ENCODE measurements at regions of chr18 and their contacts with region 1.

Region 1: DNA sequence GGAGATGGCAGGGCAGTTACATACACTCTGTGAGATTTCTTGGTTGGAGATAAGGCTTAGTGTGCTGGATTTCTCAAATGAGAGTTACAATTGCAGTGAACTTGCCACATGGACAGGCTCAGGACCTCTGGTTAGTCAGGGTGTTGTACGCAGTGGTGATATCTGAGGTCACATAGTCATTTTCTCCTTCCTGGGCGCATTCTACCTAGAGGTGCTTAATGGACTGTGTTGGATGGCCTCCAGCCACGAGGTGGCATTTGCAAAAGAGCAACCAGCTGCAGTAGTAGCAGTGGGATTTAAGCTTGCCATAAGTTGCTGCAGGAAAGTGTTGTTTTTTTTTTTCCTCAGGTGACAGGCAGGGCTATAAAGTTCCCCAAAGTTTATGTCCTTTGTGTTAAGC is 173.8 kb upstream of the TMEM200C start:
- DNase-seq: no peak
- H3K4me3 ChIP-seq: no peak overlapping the region
- H3K27ac ChIP-seq: no peak overlapping the region
- H3K4me1 ChIP-seq: no peaks in the 10 kb centered on the region
- H3K27me3 ChIP-seq: no peaks in the 10 kb centered on the region
- CTCF ChIP-seq: no peak

Region 2: DNA sequence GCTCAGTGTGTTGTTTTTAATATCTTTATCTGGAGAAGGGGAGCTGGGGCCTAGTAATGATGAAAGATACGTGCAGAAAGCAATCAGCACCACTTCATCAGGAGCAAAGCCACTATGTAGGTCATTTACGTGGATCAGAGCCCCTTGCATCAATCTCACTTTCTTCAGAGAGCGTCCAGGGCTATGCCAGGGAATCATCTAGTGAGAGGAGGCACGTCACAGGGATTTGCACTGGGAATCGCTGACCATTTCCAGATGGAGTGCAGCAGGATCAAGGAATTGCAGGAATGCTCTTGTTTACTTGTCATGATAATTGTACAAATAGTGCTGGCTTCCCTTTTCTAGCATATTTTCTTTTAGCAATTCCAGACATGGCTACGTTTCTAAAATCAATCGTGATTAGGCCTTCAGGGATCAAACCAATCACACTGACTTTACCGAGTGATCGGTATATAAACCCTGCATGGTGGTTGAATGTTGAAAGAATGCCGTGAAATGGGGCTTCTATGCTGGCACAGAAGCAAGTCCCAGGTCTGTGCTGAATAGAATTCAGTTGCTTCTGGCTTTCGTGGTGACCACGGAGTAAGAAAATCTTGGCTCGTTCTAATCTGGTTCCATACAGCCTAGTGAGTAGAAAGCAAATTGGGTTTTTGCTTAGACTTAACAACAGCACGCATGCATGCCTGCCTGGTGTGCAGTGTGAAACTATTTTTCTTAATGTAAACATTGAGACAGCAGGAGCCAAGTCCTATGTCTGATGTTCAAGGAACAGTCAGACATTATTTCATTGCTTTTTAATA is 296.6 kb before region 1 on chr18:
- CTCF ChIA-PET with region 1: no interaction called
- POLR2A ChIA-PET with region 1: interaction called, 11 read pairs
- intact Hi-C with region 1: no loop called
- DNase-seq: no peak
- H3K4me3 ChIP-seq: no peak overlapping the region
- H3K27ac ChIP-seq: no peak overlapping the region
- H3K4me1 ChIP-seq: no peaks in the 10 kb centered on the region
- H3K27me3 ChIP-seq: peaks cover 4% of the 10 kb centered on the region; the same call in 1 of the 2 replicates
- CTCF ChIP-seq: no peak

Region 3: GRCh38 chr18:6044773-6045172 is 24.3 kb before region 1 on chr18:
- CTCF ChIA-PET with region 1: no interaction called
- POLR2A ChIA-PET with region 1: no interaction called
- intact Hi-C with region 1: no loop called
- DNase-seq: no peak
- H3K4me3 ChIP-seq: no peak overlapping the region
- H3K27ac ChIP-seq: no peak overlapping the region
- H3K4me1 ChIP-seq: no peaks in the 10 kb centered on the region
- H3K27me3 ChIP-seq: no peaks in the 10 kb centered on the region; the same call in 1 of the 2 replicates
- CTCF ChIP-seq: peak; percentile 29

Region 4: DNA sequence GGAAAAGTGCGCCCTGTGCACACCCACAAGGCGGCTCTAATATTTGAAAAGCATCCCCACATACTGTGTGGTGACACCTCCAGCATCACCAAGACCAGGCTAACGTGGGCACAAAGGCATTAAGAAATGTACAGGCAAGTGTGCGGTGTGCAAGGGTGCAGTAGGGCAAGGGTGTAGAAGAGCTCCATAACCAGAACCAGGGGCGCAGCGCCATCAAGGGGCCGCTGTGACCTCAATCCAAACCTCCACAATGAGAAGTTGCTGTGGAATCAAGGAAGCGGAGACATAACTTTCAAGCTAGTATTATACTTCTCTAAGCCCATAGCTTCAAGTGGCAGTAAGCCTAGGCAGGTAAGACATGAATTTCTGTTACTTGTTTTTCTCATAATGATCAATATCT is 332.6 kb after region 1 on chr18:
- CTCF ChIA-PET with region 1: no interaction called
- POLR2A ChIA-PET with region 1: no interaction called
- intact Hi-C with region 1: no loop called
- DNase-seq: no peak
- H3K4me3 ChIP-seq: no peak overlapping the region
- H3K27ac ChIP-seq: no peak overlapping the region
- H3K4me1 ChIP-seq: no peaks in the 10 kb centered on the region
- H3K27me3 ChIP-seq: peaks cover 5% of the 10 kb centered on the region; the same call in 1 of the 2 replicates
- CTCF ChIP-seq: no peak

Measured in PC-9 (cell line).